ENCODE measurements at regions of chr4 and their contacts with region 1.

Region 1: DNA sequence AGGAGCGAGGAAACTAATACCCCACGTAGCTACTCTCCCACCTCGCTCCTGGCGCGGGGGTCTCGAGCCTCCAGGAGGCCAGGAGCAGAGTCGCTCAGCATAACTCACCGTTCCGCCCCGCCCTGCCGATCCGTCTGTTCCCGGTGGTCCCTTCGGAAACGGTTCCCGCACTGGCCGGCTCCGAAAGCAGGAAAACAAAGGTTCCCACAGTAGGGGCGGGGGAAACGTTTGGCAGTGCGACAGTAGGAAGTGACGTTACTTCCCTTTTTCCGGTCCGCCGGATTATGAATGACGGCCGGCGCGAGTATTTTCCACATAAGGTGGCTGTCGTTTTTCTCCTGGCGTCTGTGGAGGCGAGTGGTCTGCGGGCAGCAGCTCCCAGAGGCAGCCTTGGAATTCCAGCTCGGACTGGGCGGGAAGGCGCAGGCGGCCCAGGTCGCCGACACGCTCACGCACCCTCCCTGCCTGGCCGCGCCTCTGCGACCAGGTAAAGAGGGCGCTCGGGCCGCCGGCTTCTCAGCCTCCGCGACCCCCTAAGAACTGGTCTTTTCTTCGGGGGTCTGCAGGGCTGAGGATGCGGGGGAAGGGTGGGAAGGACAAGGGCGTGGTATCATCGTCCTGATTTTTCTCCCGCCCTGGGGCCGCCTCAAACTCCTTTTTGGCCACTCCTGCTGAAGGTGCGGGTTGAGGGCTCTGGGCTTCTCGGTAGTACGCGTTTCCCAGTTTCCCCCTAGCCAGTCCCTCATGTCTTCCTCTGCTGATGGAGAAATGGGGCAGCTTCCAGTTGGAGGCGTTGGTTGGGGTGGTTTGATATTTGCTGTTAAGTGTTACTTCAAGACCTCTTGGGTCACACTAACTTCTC is at the starts of genes GSTCD and INTS12:
- DNase-seq: peak; percentile 84 to 87 (median 86)
- H3K4me3 ChIP-seq: peak within 1 kb of the TSS; percentile 70 to 92
- H3K4me3 Mint-ChIP-seq: peak within 1 kb of the TSS; percentile 99 to 100 (median 100)
- H3K27ac ChIP-seq: peak within 1 kb of the TSS; percentile 65
- H3K27ac Mint-ChIP-seq: peak within 1 kb of the TSS; percentile 93 to 99 (median 98)
- H3K4me1 ChIP-seq: peaks cover 20% of the 10 kb centered on the region
- H3K4me1 Mint-ChIP-seq: peaks cover 23 to 45% (median 29%) of the 10 kb centered on the region in 4 donors
- H3K27me3 ChIP-seq: no peaks in the 10 kb centered on the region
- H3K27me3 Mint-ChIP-seq: no peaks in the 10 kb centered on the region
- total RNA-seq, gene GSTCD: 4.7 to 5.0 TPM
- total RNA-seq, gene INTS12: 16.6 to 17.5 TPM

Region 2: DNA sequence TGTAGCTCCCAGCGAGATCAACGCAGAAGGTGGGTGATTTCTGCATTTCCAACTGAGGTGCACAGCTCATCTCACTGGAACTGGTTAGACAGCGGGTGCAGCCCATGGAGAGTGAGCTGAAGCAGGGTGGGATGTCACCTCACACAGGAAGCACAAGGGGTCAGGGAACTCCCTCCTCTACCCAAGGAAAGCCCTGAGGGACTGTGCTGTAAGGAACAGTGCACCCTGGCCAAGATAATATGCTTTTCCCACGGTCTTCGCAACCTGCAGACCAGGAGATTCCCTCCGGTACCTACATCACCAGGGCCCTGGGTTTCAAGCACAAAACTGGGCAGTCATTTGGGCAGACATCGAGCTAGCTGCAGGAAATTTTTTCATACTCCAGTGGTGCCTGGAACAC is 778.5 kb before region 1 on chr4:
- CTCF ChIA-PET with region 1: no interaction called
- POLR2A ChIA-PET with region 1: no interaction called
- intact Hi-C with region 1: loop called (anchors 10 kb)
- DNase-seq: no peak
- H3K4me3 ChIP-seq: no peak overlapping the region
- H3K4me3 Mint-ChIP-seq: peak overlapping the region in 6 of 8 donors; percentile 7 to 63 (median 28)
- H3K27ac ChIP-seq: no peak overlapping the region
- H3K27ac Mint-ChIP-seq: peak overlapping the region in 2 of 7 donors; percentile 28 to 30
- H3K4me1 ChIP-seq: peaks cover 21% of the 10 kb centered on the region
- H3K4me1 Mint-ChIP-seq: peaks cover 10 to 27% (median 20%) of the 10 kb centered on the region in 4 donors
- H3K27me3 ChIP-seq: no peaks in the 10 kb centered on the region
- H3K27me3 Mint-ChIP-seq: no peaks in the 10 kb centered on the region

Region 3: GRCh38 chr4:105146276-105147015 is 562.3 kb before region 1 on chr4 and contains the start of gene TET2:
- CTCF ChIA-PET with region 1: no interaction called
- POLR2A ChIA-PET with region 1: no interaction called
- intact Hi-C with region 1: loop called (anchors 1 kb)
- DNase-seq: peak; percentile 79 to 88 (median 83)
- H3K4me3 ChIP-seq: peak within 1 kb of the TSS; percentile 100
- H3K4me3 Mint-ChIP-seq: peak within 1 kb of the TSS; percentile 97 to 100 (median 100)
- H3K27ac ChIP-seq: peak within 1 kb of the TSS; percentile 81
- H3K27ac Mint-ChIP-seq: peak within 1 kb of the TSS; percentile 97 to 100 (median 99)
- H3K4me1 ChIP-seq: peaks cover 27% of the 10 kb centered on the region
- H3K4me1 Mint-ChIP-seq: peaks cover 22 to 53% (median 33%) of the 10 kb centered on the region in 4 donors
- H3K27me3 ChIP-seq: no peaks in the 10 kb centered on the region
- H3K27me3 Mint-ChIP-seq: no peaks in the 10 kb centered on the region
- total RNA-seq, gene TET2: 20.2 to 20.7 TPM

Region 4: GRCh38 chr4:106315968-106316772 is 607.4 kb after region 1 on chr4 and contains the starts of genes AIMP1 and TBCK:
- CTCF ChIA-PET with region 1: no interaction called
- POLR2A ChIA-PET with region 1: no interaction called
- intact Hi-C with region 1: loop called (anchors 1 kb)
- DNase-seq: peak; percentile 90 to 93 (median 92)
- H3K4me3 ChIP-seq: peak within 1 kb of the TSS; percentile 91 to 94
- H3K4me3 Mint-ChIP-seq: no peak within 1 kb of the TSS
- H3K27ac ChIP-seq: peak within 1 kb of the TSS; percentile 96
- H3K27ac Mint-ChIP-seq: no peak within 1 kb of the TSS
- H3K4me1 ChIP-seq: peaks cover 41% of the 10 kb centered on the region
- H3K4me1 Mint-ChIP-seq: peaks cover 22 to 44% (median 23%) of the 10 kb centered on the region in 4 donors
- H3K27me3 ChIP-seq: no peaks in the 10 kb centered on the region
- H3K27me3 Mint-ChIP-seq: no peaks in the 10 kb centered on the region
- total RNA-seq, gene AIMP1: 47.0 to 51.9 TPM
- total RNA-seq, gene TBCK: 61.3 to 62.3 TPM

Measured in CD4-positive, alpha-beta memory T cell (primary cell).